ENCODE measurements at regions of chr12 and their contacts with region 1.

Region 1: DNA sequence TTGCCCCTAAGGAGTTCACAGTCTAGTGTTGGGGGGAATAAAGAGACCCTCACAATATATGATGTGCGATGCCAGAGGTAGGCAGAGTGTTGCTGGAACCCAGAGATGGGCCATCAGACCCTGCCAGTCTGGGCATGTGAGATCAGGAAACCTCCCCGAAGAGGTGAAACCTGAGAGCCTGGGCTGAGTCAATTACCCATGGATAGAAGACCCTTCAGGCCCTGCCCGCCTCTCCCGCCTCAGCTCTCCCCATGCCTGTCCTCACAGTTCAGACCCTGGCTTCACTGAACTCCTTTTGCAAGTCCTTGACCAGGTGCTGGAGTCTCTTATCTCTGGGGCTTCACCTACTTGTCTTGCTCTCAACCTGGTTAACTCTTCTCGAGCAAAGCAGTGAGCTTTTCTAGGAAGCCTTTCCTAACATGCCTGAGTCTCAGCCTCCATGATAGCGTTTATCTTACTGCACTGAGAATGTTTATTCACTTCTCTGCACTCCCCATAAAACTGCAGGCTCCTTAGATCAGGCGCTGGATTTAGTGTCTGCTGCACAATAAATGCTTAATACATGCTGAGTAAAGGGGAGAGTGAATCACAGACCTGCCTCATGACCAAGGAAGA is 19.6 kb downstream of the ALDH1L2 start:
- DNase-seq: no peak
- H3K4me3 ChIP-seq: no peak overlapping the region
- H3K27ac ChIP-seq: no peak overlapping the region
- H3K4me1 ChIP-seq: no peaks in the 10 kb centered on the region
- H3K27me3 ChIP-seq: no peaks in the 10 kb centered on the region
- CTCF ChIP-seq: no peak

Region 2: GRCh38 chr12:104569346-104570173 is 495.1 kb before region 1 on chr12:
- CTCF ChIA-PET with region 1: no interaction called
- POLR2A ChIA-PET with region 1: interaction called, 22 read pairs
- intact Hi-C with region 1: no loop called
- DNase-seq: no peak
- H3K4me3 ChIP-seq: no peak overlapping the region
- H3K27ac ChIP-seq: no peak overlapping the region
- H3K4me1 ChIP-seq: no peaks in the 10 kb centered on the region
- H3K27me3 ChIP-seq: no peaks in the 10 kb centered on the region
- CTCF ChIP-seq: no peak

Region 3: GRCh38 chr12:105076098-105076497 is 11.4 kb after region 1 on chr12:
- CTCF ChIA-PET with region 1: interaction called, 12 read pairs
- POLR2A ChIA-PET with region 1: no interaction called
- intact Hi-C with region 1: no loop called
- DNase-seq: no peak
- H3K4me3 ChIP-seq: no peak overlapping the region
- H3K27ac ChIP-seq: no peak overlapping the region
- H3K4me1 ChIP-seq: no peaks in the 10 kb centered on the region
- H3K27me3 ChIP-seq: no peaks in the 10 kb centered on the region
- CTCF ChIP-seq: no peak

Region 4: GRCh38 chr12:105100998-105101397 is 36.3 kb after region 1 on chr12:
- CTCF ChIA-PET with region 1: no interaction called
- POLR2A ChIA-PET with region 1: no interaction called
- intact Hi-C with region 1: loop called (anchors 5 kb)
- DNase-seq: no peak
- H3K4me3 ChIP-seq: no peak overlapping the region
- H3K27ac ChIP-seq: no peak overlapping the region
- H3K4me1 ChIP-seq: peaks cover 16% of the 10 kb centered on the region
- H3K27me3 ChIP-seq: no peaks in the 10 kb centered on the region
- CTCF ChIP-seq: peak; percentile 27; the same call in 1 of the 2 replicates

Region 5: DNA sequence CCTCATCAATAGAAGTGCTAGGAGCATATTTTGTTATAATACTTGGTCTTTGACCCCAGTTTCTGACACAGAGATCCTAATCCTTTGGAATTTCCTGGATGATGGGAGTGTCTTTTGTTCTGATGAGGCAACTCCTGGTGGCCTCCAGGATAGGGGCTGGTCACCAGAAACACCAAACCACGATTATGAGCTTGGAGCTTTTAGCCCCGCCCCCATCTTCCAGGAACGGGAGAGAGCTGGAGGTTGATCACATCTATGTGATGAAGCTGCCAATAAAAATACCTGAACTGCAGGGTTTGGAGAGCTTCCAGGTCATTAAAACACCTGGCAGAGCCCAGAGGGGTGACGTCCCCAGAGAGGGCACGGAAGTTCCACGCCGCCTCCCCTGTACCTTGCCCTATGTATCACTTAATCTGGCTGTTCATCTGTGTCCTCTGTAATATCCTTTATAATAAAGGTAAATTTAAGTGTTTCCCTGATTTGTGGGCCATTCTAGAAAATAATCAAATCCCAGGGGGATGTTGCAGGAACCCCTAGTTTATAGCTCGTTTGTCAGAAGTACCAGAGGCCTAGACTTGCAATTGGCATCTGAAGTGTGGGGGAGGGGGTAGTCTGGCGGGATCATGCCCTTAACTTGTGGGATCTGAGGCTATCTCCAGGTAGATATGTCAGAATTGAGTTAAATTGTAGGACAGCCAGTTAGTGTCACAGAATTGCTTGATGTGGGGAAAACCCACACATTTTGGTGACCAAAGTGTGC is 150.1 kb after region 1 on chr12:
- CTCF ChIA-PET with region 1: no interaction called
- POLR2A ChIA-PET with region 1: no interaction called
- intact Hi-C with region 1: no loop called
- DNase-seq: peak in 1 of 2 experiments; percentile 71
- H3K4me3 ChIP-seq: no peak overlapping the region
- H3K27ac ChIP-seq: peak overlapping the region; percentile 75
- H3K4me1 ChIP-seq: peaks cover 31% of the 10 kb centered on the region
- H3K27me3 ChIP-seq: no peaks in the 10 kb centered on the region
- CTCF ChIP-seq: no peak

Measured in PC-9 (cell line).